Ascending aorta (tissue), 2 donors: ENCODE measurements at regions of chrX and their contacts with region 1.

Region 1: GRCh38 chrX:54999717-55000598 is at the start of gene APEX2:
- DNase-seq: peak; percentile 82 to 95
- H3K4me3 ChIP-seq: peak within 1 kb of the TSS; percentile 64 to 68
- H3K27ac ChIP-seq: peak within 1 kb of the TSS; percentile 86 to 87
- H3K4me1 ChIP-seq: peaks cover 0 to 3% of the 10 kb centered on the region in 2 donors
- H3K27me3 ChIP-seq: no peaks in the 10 kb centered on the region
- CTCF ChIP-seq: no peak
- total RNA-seq, gene APEX2: 31.5 TPM

Region 2: GRCh38 chrX:54044126-54044876 is 955.7 kb before region 1 on chrX and contains the start of gene PHF8:
- intact Hi-C with region 1: loop called (anchors 5 kb)
- DNase-seq: peak; percentile 78 to 97
- H3K4me3 ChIP-seq: peak within 1 kb of the TSS; percentile 64 to 73
- H3K27ac ChIP-seq: peak within 1 kb of the TSS; percentile 85 to 96
- H3K4me1 ChIP-seq: no peaks in the 10 kb centered on the region
- H3K27me3 ChIP-seq: no peaks in the 10 kb centered on the region
- CTCF ChIP-seq: no peak
- total RNA-seq, gene PHF8: 41.6 TPM

Region 3: DNA sequence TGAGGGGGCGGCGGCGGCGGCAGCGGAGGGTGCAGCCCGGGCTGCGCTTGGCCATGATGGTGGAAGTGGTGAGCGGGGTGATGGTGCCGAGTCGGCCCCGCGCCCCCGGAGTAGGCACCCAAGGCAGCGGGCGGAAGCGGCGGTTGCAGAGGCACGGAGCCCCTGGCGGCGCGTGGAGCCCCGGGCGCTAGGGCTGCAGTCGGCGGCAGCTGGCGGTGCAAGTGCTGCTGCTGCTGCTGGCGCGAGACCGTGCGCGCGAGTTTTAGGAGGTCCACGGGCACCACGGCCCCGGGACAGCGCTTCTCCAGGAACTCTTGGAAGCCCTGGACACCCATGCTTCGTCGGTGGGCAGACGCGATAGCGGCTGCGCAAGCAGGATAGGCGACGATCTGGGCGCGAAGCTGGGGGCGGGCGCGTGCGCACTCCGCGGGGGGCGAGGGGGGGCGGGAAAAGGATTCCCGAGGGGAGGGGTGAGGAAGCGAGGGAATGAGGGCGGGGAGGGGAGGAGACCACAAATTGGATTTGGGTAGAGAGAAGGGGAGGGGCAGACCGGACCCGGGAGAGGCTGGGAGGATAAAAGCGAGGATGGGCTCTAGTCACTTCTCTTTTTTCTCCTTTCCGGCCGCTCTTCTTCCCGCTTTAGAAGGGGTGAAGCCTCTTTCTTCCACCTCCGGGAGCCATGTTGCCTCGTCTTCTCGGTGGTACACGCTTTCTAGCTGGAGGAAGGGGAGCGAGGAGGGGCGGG is 816.9 kb before region 1 on chrX and contains the start of gene FAM120C:
- intact Hi-C with region 1: loop called (anchors 10 kb)
- DNase-seq: peak in 1 of 2 donors; percentile 73
- H3K4me3 ChIP-seq: peak within 1 kb of the TSS; percentile 69 to 78
- H3K27ac ChIP-seq: peak within 1 kb of the TSS; percentile 86 to 91
- H3K4me1 ChIP-seq: peaks cover 0 to 3% of the 10 kb centered on the region in 2 donors
- H3K27me3 ChIP-seq: no peaks in the 10 kb centered on the region
- CTCF ChIP-seq: no peak
- total RNA-seq, gene FAM120C: 1.6 TPM

Region 4: DNA sequence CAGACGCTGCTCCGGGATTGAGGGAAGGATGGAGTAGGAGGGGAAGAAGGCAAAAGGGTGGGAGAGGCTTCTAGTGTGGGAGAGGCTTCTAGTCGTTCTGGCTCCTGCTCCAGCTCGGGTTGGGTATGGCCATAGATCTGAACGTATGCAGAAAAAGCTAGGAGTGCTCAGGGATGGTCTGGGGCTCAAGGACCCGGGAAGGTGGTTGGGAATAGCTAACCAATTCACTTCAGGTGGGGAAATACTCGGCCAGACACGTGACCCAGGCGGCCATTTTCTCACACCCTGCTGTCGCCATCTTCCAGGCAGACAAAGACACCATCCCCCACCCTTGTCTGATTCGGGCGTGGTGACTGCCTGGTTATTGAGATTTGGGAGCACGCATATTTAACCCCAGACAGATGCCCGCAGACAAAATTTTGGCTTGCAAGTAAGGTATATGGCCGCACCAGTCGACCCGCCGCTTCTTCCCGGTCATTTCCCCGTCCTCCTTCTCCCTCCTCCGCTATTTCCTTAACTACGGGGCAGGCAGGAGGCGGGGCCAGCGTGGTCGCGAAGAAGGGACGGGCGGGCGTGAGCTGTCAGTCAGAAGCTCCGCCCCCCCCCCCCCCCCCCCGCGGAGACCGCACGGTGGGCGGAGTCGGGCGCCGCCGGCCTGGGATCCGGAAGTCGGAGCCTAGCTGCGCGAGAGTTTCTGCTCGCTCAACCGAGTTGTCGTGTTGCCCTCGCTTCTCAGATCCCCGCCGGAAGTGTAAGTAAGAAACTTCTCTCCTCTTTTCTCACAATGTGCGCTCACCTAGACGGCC is 470.2 kb before region 1 on chrX and contains the start of gene GNL3L:
- intact Hi-C with region 1: loop called (anchors 10 kb)
- DNase-seq: peak; percentile 60 to 92
- H3K4me3 ChIP-seq: peak within 1 kb of the TSS; percentile 69 to 79
- H3K27ac ChIP-seq: peak within 1 kb of the TSS; percentile 65 to 73
- H3K4me1 ChIP-seq: no peaks in the 10 kb centered on the region
- H3K27me3 ChIP-seq: no peaks in the 10 kb centered on the region
- CTCF ChIP-seq: no peak
- total RNA-seq, gene GNL3L: 15.4 TPM

Region 5: GRCh38 chrX:54921427-54922021 is 78.4 kb before region 1 on chrX:
- intact Hi-C with region 1: loop called (anchors 5 kb)
- DNase-seq: no peak
- H3K4me3 ChIP-seq: peak overlapping the region; percentile 48 to 58
- H3K27ac ChIP-seq: peak overlapping the region; percentile 31 to 42
- H3K4me1 ChIP-seq: no peaks in the 10 kb centered on the region
- H3K27me3 ChIP-seq: no peaks in the 10 kb centered on the region
- CTCF ChIP-seq: peak in 1 of 3 experiments; percentile 3

Region 6: DNA sequence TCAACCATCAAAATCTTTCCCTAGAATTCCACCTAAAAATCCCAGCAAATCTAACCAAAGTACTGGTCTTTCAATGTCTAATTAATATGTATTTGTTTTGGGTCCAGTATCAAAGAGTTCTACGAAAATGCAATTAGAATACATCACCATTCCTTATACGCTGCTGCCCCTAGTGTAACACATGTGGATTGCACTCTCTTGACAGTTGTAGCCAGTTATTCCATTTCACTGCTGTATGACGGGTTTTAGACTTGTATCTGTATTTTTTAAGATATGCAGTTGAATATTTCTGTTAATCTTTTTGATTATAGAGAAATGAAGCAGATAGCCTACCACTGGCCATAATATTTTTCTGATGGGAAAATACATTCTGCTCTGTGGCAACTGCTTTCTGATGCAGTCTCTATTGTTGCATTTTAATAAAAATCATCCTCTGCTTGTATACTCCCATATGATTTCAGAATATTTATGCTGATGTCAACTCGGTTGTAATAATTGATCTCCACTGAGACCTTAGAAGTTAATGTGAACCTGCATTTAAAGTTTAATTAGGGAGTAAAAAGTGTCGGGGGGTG is 57.8 kb after region 1 on chrX:
- intact Hi-C with region 1: loop called (anchors 2 kb)
- DNase-seq: peak in 1 of 2 donors; percentile 62
- H3K4me3 ChIP-seq: peak overlapping the region in 1 of 2 donors; percentile 58
- H3K27ac ChIP-seq: no peak overlapping the region
- H3K4me1 ChIP-seq: no peaks in the 10 kb centered on the region
- H3K27me3 ChIP-seq: no peaks in the 10 kb centered on the region
- CTCF ChIP-seq: peak; percentile 36 to 79 (median 71)

Region 7: GRCh38 chrX:55160685-55161552 is 161.0 kb after region 1 on chrX:
- intact Hi-C with region 1: loop called (anchors 2 kb)
- DNase-seq: peak; percentile 55 to 92
- H3K4me3 ChIP-seq: peak overlapping the region; percentile 46 to 68
- H3K27ac ChIP-seq: peak overlapping the region; percentile 87 to 89
- H3K4me1 ChIP-seq: no peaks in the 10 kb centered on the region
- H3K27me3 ChIP-seq: no peaks in the 10 kb centered on the region
- CTCF ChIP-seq: peak; percentile 24 to 51 (median 51)